ENCODE measurements at regions of chr16 and their contacts with region 1.

Region 1: DNA sequence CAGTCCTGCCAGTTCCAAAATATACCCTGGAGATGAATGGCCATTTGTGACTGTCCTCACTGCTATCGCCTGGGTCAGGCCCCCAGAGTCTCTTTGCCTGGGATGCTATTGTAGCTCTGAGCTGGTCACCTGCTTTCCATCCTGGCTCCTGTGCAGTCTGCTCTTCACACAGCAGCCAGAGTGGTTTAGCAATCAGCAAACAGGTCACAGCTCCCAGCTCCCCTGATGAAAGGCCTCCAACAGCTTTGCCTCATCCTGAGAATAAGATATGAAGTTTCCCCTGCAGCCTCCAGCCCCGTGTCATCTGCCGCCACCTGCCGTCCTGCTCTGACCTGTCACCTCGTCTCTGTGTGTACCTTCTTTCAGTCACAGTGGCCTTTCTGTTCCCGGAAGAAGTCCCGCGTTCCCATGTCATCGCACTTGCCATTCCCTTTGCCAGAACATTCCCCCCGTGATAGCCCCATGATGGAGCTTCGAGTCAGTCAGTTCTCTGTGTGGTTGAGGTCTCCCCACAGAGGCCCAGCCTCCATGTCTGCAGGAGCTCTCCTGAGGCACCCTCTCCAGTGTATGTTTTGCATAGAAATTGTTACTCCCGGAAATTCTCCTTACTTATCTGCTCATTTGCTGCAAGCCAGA is 281.5 kb downstream of the SNX29 start:
- DNase-seq: peak; percentile 83 to 88 (median 87)
- ATAC-seq: peak; percentile 90 to 94 (median 92)
- H3K4me3 ChIP-seq: no peak overlapping the region
- H3K27ac ChIP-seq: no peak overlapping the region
- H3K4me1 ChIP-seq: peaks cover 0 to 15% (median 4%) of the 10 kb centered on the region in 4 donors
- H3K27me3 ChIP-seq: no peaks in the 10 kb centered on the region
- CTCF ChIP-seq: peak; percentile 55 to 75 (median 71)
- POLR2A ChIP-seq: no peak

Region 2: GRCh38 chr16:12095275-12096156 is 162.5 kb before region 1 on chr16:
- intact Hi-C with region 1: loop called (anchors 5 to 10 kb)
- DNase-seq: peak; percentile 66 to 70 (median 66)
- ATAC-seq: peak; percentile 16 to 56 (median 52)
- H3K4me3 ChIP-seq: no peak overlapping the region
- H3K27ac ChIP-seq: peak overlapping the region in 1 of 3 donors; percentile 24
- H3K4me1 ChIP-seq: peaks cover 0 to 29% (median 13%) of the 10 kb centered on the region in 4 donors
- H3K27me3 ChIP-seq: no peaks in the 10 kb centered on the region
- CTCF ChIP-seq: peak; percentile 88 to 94 (median 90)
- POLR2A ChIP-seq: no peak

Measured in right lobe of liver (tissue), 6 donors.